ENCODE measurements at regions of chr1 and their contacts with region 1.

Region 1: DNA sequence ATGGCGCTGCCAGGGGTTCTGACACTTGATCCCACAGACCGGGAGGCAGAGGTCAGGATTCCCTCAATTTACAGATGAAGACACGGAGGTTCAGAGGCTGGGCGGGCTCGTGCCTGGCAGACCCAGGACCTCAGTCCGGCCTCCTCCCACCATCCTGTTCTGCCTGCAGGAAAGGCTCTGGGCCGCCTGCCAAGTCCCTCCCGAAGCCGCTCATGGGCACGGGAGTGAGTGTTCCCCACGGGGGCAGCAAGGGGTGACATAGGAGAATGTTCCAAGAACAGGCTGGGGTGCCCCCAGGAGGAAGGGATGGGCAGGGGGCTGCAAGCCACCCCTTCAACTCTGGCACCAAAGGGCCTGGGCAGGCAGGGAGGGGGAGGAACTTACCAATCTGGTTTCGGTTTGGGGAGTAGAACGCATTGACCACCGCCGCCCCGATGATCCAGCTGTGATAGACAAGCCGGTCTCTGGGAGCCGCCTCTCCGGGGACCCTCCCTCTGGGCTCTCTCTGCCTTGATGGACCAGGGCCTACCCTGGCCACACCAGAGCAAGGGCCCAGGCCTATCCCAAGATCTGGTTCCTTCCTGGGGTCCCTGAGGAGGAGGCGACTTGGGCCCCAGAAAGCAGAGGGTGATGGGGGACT is 7.5 kb downstream of the PRXL2B start:
- DNase-seq: no peak
- H3K4me3 ChIP-seq: peak overlapping the region; percentile 29 to 38
- H3K27ac ChIP-seq: no peak overlapping the region
- H3K4me1 ChIP-seq: peaks cover 18% of the 10 kb centered on the region
- H3K27me3 ChIP-seq: no peaks in the 10 kb centered on the region
- CTCF ChIP-seq: no peak
- POLR2A ChIP-seq: no peak

Region 2: DNA sequence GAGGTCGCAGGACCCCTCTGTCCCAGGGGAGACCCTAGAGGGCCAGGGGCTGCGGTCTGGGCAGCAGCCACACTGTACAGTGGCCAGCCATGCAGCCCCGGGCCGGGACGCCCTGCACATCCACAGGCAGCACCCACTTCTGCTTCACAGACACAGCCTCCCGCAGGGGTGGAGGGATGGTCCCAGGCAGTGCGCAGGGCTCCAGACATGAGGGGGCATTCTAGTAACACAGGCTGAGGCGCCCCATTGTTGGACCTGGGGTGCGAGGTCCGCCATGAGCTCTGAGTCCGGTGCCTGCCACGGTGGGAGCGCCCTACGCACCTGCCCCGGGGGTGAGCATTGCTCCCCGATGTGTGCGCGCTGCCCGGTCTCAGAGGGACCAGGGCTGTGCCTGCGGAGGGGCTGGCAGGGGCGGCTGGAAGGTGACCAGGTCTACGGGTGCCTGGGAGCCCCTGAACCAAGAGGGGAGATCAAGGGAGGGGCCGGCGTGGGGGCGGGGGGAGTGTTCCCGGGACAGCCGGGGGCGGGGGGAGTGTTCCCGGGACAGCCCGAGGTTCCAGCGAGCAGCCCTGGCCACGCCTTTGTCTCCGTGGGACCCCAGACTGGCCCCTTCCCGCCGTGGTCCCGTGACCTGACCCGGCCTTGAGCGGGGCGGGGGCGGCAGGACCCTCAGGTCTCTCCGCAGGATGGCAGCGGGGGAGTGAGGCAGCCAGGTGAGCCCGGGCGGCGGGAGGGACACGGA is 34.2 kb after region 1 on chr1:
- intact Hi-C with region 1: no loop called
- DNase-seq: no peak
- H3K4me3 ChIP-seq: no peak overlapping the region
- H3K27ac ChIP-seq: no peak overlapping the region
- H3K4me1 ChIP-seq: peaks cover 7% of the 10 kb centered on the region
- H3K27me3 ChIP-seq: peaks cover 10% of the 10 kb centered on the region
- CTCF ChIP-seq: no peak
- POLR2A ChIP-seq: no peak

Region 3: DNA sequence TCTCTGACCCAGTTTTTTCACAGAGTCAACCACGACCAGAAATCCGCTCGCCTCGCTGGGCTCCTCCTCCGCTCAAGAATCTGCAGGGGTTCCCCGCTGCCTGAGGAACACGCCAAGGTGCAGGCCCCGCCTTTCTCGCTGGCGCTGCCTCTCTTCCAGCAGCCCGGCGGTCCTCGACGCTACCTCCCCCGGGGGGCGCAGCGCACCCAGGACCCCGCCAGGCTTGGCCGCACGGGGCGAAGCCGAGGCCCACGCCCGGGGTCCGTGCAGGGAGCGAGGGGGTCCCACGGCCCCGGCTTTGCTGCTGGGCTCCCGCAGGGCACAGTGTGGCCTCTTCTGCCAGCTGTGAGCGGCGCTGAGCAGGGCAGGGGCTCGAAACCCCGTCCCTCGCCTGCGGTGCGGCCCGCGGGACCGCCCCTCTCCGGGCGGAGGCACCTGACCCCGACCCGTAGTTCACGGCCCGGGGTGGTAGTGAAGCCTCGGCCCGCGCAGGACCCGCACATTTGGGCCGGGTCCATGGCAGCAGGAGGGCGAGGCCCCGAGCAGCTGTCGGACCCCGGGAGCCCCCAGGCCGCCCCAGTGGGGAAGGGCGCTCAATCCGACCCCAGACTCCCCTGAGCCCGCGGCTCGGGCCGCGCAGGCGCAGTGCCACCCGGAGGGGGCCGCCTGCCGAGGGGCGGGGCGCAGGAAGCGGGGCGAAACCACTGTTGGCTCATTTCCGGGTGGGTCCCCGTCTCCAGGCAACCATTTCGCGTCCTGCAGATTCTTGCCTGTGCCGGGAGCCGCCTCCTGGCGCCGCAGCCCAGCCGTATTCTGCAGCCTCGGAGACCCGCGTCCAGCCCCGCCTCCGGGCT is 48.7 kb after region 1 on chr1:
- intact Hi-C with region 1: loop called (anchors 5 kb)
- DNase-seq: no peak
- H3K4me3 ChIP-seq: peak overlapping the region; percentile 81 to 85
- H3K27ac ChIP-seq: peak overlapping the region; percentile 84
- H3K4me1 ChIP-seq: peaks cover 25% of the 10 kb centered on the region
- H3K27me3 ChIP-seq: no peaks in the 10 kb centered on the region
- CTCF ChIP-seq: no peak
- POLR2A ChIP-seq: peak in 1 of 2 donors; percentile 75

Measured in vagina (tissue), 2 donors.